Natural killer cell (primary cell): ENCODE measurements at regions of chr17 and their contacts with region 1.

Region 1: GRCh38 chr17:1561400-1562175 is 1.0 kb downstream of the PITPNA start:
- DNase-seq: peak; percentile 33 to 63
- ATAC-seq: peak; percentile 24 to 39 (median 30)
- H3K4me3 ChIP-seq: peak overlapping the region; percentile 23
- H3K4me3 Mint-ChIP-seq: peak overlapping the region; percentile 81
- H3K27ac ChIP-seq: no peak overlapping the region
- H3K27ac Mint-ChIP-seq: peak overlapping the region; percentile 63 to 84
- H3K4me1 ChIP-seq: peaks cover 23% of the 10 kb centered on the region
- H3K4me1 Mint-ChIP-seq: peaks cover 34 to 43% of the 10 kb centered on the region in 2 donors
- H3K27me3 ChIP-seq: no peaks in the 10 kb centered on the region
- H3K27me3 Mint-ChIP-seq: no peaks in the 10 kb centered on the region
- CTCF ChIP-seq: peak; percentile 29

Region 2: GRCh38 chr17:1331708-1332107 is 229.9 kb before region 1 on chr17:
- intact Hi-C with region 1: no loop called
- DNase-seq: peak in 1 of 2 donors; percentile 48
- ATAC-seq: peak in 1 of 3 donors; percentile 38
- H3K4me3 ChIP-seq: no peak overlapping the region
- H3K4me3 Mint-ChIP-seq: no peak overlapping the region
- H3K27ac ChIP-seq: no peak overlapping the region
- H3K27ac Mint-ChIP-seq: no peak overlapping the region
- H3K4me1 ChIP-seq: peaks cover 3% of the 10 kb centered on the region
- H3K4me1 Mint-ChIP-seq: peaks cover 12% of the 10 kb centered on the region in 2 donors
- H3K27me3 ChIP-seq: peaks cover 2% of the 10 kb centered on the region
- H3K27me3 Mint-ChIP-seq: no peaks in the 10 kb centered on the region
- CTCF ChIP-seq: no peak

Region 3: DNA sequence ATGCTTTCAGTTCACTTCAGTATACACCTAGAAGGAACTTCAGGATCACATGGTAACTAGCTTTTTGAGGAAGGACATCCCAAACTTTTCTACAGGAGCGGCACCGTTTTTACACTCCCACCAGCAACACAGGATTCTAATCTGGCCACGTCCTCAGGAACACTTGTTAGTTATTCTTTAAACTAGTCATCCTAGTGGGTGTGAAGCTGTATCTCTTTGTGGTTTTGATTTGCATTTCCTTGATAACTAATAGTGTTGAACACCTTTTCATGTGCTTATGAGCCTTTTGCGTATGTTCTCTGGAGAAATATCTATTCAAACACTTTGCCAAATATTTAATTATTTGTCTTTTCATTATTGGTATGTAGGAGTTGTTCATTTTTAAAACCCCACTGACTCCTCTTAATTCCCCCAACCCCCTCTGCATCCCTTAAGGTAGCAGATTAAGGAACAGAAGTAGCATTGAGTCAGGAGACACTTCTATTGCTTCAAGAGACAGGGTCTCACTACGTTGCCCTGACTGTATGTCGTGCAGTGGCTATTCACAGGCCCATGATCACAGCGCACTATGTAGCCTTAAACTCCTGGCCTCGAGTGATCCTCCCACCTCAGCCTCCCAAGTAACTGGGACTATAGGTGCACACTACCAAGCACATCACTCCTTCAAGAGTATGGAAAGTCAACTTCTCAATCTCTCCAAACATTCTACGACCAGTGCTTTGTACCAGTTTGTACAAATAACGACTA is 187.0 kb before region 1 on chr17:
- intact Hi-C with region 1: loop called (anchors 1 kb)
- DNase-seq: peak in 1 of 2 donors; percentile 53
- ATAC-seq: peak; percentile 66 to 74 (median 69)
- H3K4me3 ChIP-seq: no peak overlapping the region
- H3K4me3 Mint-ChIP-seq: peak overlapping the region; percentile 17
- H3K27ac ChIP-seq: no peak overlapping the region
- H3K27ac Mint-ChIP-seq: peak overlapping the region; percentile 47 to 80
- H3K4me1 ChIP-seq: peaks cover 63% of the 10 kb centered on the region
- H3K4me1 Mint-ChIP-seq: peaks cover 74% of the 10 kb centered on the region in 2 donors
- H3K27me3 ChIP-seq: no peaks in the 10 kb centered on the region
- H3K27me3 Mint-ChIP-seq: no peaks in the 10 kb centered on the region
- CTCF ChIP-seq: no peak

Region 4: DNA sequence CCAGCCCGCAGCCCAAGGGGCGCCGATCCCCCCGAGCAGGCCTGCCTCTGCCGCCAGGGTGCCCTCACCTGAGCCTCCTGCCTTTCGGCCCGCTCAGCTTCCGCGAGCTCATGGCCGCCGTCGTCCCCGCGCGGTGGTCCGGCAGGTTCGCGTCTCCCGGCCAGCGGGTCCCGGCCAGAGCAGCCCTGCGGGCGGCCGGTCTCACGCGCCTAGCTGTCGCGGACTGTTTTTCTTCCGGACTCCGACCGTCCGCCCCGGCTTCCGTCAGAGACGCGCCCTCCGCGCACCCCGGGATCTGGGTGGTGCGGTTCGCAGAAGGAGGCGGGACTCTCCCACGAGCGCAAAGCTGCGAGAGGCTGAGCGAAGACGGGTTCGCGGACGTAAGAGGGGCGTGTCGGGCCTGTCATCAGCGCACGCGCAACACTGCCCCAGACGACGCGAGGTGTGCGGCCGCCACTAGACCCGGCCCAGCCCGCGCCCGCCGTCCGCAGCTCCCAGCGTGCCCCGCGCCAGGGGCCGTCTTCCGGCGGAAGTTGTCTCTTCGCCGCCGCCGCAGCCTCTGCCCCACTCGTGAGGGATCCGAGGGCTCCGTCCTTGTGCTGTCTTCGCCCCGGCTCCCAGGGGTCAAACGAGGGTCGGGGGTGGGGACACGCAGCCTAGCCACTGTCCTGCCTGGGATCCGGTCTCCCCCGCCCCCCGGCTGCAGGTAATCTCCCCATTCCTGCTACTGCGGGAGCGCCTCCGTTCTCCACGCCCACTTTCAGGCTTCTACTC is 45.0 kb before region 1 on chr17 and contains the start of gene INPP5K:
- intact Hi-C with region 1: loop called (anchors 1 kb)
- DNase-seq: peak; percentile 97 to 100
- ATAC-seq: peak; percentile 89 to 98 (median 89)
- H3K4me3 ChIP-seq: peak within 1 kb of the TSS; percentile 96
- H3K4me3 Mint-ChIP-seq: peak within 1 kb of the TSS; percentile 95
- H3K27ac ChIP-seq: peak within 1 kb of the TSS; percentile 78
- H3K27ac Mint-ChIP-seq: peak within 1 kb of the TSS; percentile 89 to 94
- H3K4me1 ChIP-seq: peaks cover 25% of the 10 kb centered on the region
- H3K4me1 Mint-ChIP-seq: peaks cover 11 to 23% of the 10 kb centered on the region in 2 donors
- H3K27me3 ChIP-seq: no peaks in the 10 kb centered on the region
- H3K27me3 Mint-ChIP-seq: no peaks in the 10 kb centered on the region
- CTCF ChIP-seq: no peak
- total RNA-seq, gene INPP5K: 278 to 317 (median 292) TPM

Region 5: DNA sequence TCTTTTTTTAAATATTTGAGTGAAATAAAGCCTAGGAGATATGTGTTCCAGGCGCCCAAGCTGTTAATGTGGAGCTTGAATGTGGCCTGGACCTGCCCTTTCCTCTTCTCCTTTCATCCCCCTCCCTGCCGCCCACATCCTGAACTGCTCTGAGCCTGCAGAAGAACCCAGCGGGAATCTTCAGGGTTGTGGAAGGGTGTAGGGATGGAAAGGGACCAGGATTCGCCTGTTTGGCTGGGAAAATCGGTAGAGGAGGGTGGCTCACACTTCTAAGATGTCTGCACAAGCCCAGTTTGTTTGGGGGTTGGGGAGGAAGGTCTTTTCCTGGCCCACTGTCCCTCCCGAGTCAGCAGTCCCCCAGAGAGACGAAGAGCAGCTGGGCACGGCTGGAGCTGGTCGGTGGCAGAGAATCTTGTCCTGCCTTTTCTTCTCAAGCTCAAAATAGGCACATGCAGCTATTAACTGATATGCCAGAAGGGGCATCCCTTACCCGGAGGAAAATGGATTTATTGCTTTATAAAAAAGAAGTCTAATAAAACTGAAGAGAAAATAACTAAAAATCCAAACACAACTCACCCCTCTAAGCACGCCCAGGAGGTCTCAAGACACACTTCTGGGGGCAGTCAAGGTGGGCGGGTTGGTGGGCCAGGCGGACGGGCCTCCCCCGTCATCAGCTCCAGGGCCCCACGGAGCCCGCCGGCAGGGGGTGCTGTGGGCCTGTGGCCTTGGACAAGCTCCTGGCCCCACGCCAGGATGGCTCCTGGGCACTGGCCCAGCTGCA is 12.5 kb after region 1 on chr17:
- intact Hi-C with region 1: no loop called
- DNase-seq: peak; percentile 68 to 71
- ATAC-seq: peak; percentile 73 to 78 (median 75)
- H3K4me3 ChIP-seq: no peak overlapping the region
- H3K4me3 Mint-ChIP-seq: no peak overlapping the region
- H3K27ac ChIP-seq: no peak overlapping the region
- H3K27ac Mint-ChIP-seq: no peak overlapping the region
- H3K4me1 ChIP-seq: peaks cover 28% of the 10 kb centered on the region
- H3K4me1 Mint-ChIP-seq: peaks cover 0 to 6% of the 10 kb centered on the region in 2 donors
- H3K27me3 ChIP-seq: no peaks in the 10 kb centered on the region
- H3K27me3 Mint-ChIP-seq: no peaks in the 10 kb centered on the region
- CTCF ChIP-seq: peak; percentile 65